ENCODE measurements at regions of chr16 and their contacts with region 1.

Region 1: GRCh38 chr16:1420111-1420540 is 421 bp downstream of the UQCC4 start:
- DNase-seq: peak in 2 of 5 donors; percentile 39 to 45
- ATAC-seq: peak in 2 of 4 donors; percentile 1 to 2
- H3K4me3 ChIP-seq: peak overlapping the region; percentile 61 to 98 (median 88)
- H3K27ac ChIP-seq: peak overlapping the region in 11 of 12 donors; percentile 61 to 99 (median 98)
- H3K4me1 ChIP-seq: peaks cover 4 to 26% (median 18%) of the 10 kb centered on the region in 12 donors
- H3K27me3 ChIP-seq: no peaks in the 10 kb centered on the region
- CTCF ChIP-seq: no peak
- POLR2A ChIP-seq: no peak

Region 2: GRCh38 chr16:1315081-1316032 is 104.8 kb before region 1 on chr16:
- intact Hi-C with region 1: no loop called
- DNase-seq: no peak
- ATAC-seq: no peak
- H3K4me3 ChIP-seq: no peak overlapping the region
- H3K27ac ChIP-seq: no peak overlapping the region
- H3K4me1 ChIP-seq: peaks cover 8 to 40% (median 34%) of the 10 kb centered on the region in 12 donors
- H3K27me3 ChIP-seq: no peaks in the 10 kb centered on the region
- CTCF ChIP-seq: no peak
- POLR2A ChIP-seq: no peak

Region 3: GRCh38 chr16:1474796-1475551 is 54.8 kb after region 1 on chr16 and contains the start of gene CLCN7:
- intact Hi-C with region 1: loop called in 1 of 10 experiments (anchors 5 kb)
- DNase-seq: peak; percentile 92 to 96 (median 93)
- ATAC-seq: peak; percentile 85 to 97 (median 96)
- H3K4me3 ChIP-seq: peak within 1 kb of the TSS; percentile 68 to 99 (median 87)
- H3K27ac ChIP-seq: peak within 1 kb of the TSS; percentile 79 to 98 (median 92)
- H3K4me1 ChIP-seq: peaks cover 0 to 51% (median 19%) of the 10 kb centered on the region in 12 donors
- H3K27me3 ChIP-seq: no peaks in the 10 kb centered on the region
- CTCF ChIP-seq: peak in 1 of 12 donors; percentile 20
- POLR2A ChIP-seq: peak in 1 of 2 donors; percentile 93
- total RNA-seq, gene CLCN7: 30.3 to 70.8 (median 33.6) TPM

Region 4: DNA sequence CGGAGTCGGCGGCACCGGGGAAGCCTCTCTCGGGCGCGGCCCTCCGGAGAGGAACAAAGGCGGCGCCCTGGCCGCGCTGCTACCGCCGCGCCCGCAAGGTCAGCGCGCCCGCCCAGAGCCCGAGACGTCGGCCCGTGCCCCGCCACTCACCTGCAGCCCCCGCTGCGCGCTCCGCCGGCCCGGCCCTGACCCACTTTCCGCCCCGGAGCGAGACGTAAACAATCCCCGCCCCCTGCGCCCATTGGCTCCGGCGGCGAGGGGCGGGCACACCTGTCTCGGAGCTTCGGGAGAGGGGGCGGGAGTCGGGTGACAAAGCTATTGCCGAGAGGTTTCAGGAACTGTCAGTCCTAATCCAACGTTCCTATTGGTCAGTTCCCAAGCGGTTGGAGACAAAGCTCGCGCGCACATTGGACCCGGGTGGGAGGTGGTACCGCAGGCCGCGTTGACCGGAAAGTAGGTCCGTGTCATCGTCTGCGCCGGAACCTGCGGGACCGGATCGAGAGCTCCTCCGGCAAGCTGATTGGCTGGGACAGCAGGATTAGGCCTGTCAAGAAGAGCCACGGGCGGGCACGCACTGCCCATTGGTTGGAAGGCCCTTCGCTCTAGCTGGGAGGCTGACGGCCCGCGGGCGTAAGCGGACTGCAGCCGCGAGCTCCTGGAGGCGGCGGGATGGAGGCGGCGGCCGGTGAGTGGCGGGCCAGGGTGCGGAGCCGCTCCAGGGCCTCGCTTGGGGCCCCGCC is 362.4 kb after region 1 on chr16 and contains the starts of genes NUBP2 and SPSB3:
- intact Hi-C with region 1: no loop called
- DNase-seq: peak; percentile 100
- ATAC-seq: peak; percentile 93 to 98 (median 96)
- H3K4me3 ChIP-seq: peak within 1 kb of the TSS; percentile 75 to 100 (median 95)
- H3K27ac ChIP-seq: peak within 1 kb of the TSS; percentile 58 to 94 (median 88)
- H3K4me1 ChIP-seq: peaks cover 2 to 56% (median 28%) of the 10 kb centered on the region in 12 donors
- H3K27me3 ChIP-seq: no peaks in the 10 kb centered on the region
- CTCF ChIP-seq: peak in 1 of 12 donors; percentile 10
- POLR2A ChIP-seq: peak; percentile 80 to 93
- total RNA-seq, gene NUBP2: 26.7 to 81.9 (median 30.1) TPM
- total RNA-seq, gene SPSB3: 25.8 to 100 (median 31.8) TPM